T-cell (primary cell): ENCODE measurements at regions of chr11 and their contacts with region 1.

Region 1: GRCh38 chr11:84355911-84356310 is 1069.7 kb upstream of the CCDC90B start:
- DNase-seq: no peak
- ATAC-seq: no peak
- H3K4me3 ChIP-seq: no peak overlapping the region
- H3K4me3 Mint-ChIP-seq: no peak overlapping the region
- H3K27ac ChIP-seq: no peak overlapping the region
- H3K27ac Mint-ChIP-seq: no peak overlapping the region
- H3K4me1 ChIP-seq: no peaks in the 10 kb centered on the region
- H3K4me1 Mint-ChIP-seq: no peaks in the 10 kb centered on the region
- H3K27me3 ChIP-seq: no peaks in the 10 kb centered on the region
- H3K27me3 Mint-ChIP-seq: no peaks in the 10 kb centered on the region

Region 2: DNA sequence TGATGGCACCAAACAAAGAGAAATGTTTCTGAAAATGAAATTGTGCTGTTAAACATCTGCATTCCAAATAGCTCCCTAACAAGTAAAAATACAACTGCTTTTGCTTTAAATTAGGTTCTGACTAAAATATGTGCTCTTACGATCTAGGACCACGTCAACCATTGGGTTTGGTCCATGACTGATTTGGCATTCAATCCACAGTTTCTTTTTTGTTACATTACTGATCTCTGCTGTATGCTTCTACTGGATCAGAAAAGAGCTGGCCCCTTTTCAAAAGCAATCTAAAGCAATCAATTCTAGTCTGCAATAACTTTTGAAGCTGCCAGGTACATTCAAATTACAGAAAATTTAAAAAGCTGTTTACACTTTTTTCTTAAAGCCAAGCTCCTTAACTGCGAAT is 22.7 kb before region 1 on chr11:
- CTCF ChIA-PET with region 1: no interaction called
- POLR2A ChIA-PET with region 1: interaction called in 1 of 2 experiments, 10 read pairs
- DNase-seq: no peak
- ATAC-seq: no peak
- H3K4me3 ChIP-seq: no peak overlapping the region
- H3K4me3 Mint-ChIP-seq: no peak overlapping the region
- H3K27ac ChIP-seq: no peak overlapping the region
- H3K27ac Mint-ChIP-seq: no peak overlapping the region
- H3K4me1 ChIP-seq: no peaks in the 10 kb centered on the region
- H3K4me1 Mint-ChIP-seq: no peaks in the 10 kb centered on the region
- H3K27me3 ChIP-seq: no peaks in the 10 kb centered on the region
- H3K27me3 Mint-ChIP-seq: no peaks in the 10 kb centered on the region